ENCODE measurements at regions of chr11 and their contacts with region 1.

Region 1: DNA sequence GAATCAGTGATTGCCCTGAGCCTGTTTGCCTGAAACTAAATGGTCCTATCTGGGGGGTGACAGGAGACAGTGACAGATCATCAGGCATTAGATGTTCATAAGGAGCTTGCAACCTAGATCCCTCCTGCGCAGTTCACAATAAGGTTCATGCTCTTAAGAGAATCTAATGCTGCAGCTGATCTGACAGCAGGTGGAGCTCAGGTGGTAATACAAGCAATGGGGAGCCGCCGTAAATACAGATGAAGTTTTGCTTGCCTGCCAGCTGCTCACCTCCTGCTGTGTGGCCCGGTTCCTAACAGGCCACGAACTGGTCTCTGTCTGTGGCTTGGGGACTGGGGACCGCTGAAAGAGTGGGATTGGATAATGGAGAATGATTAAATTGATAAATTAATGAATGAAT is 14.0 kb downstream of the NOX4 start:
- DNase-seq: no peak
- ATAC-seq: no peak

Region 2: GRCh38 chr11:89545691-89546090 is 68.5 kb after region 1 on chr11:
- intact Hi-C with region 1: loop called (anchors 2 kb)
- DNase-seq: no peak
- ATAC-seq: no peak